ENCODE measurements at regions of chr17 and their contacts with region 1.

Region 1: GRCh38 chr17:42248351-42249179 is 27.6 kb downstream of the STAT5B start:
- DNase-seq: no peak
- H3K4me3 ChIP-seq: peak overlapping the region; percentile 18; the same call in 1 of the 2 replicates
- H3K27me3 ChIP-seq: no peaks in the 10 kb centered on the region
- CTCF ChIP-seq: no peak

Region 2: DNA sequence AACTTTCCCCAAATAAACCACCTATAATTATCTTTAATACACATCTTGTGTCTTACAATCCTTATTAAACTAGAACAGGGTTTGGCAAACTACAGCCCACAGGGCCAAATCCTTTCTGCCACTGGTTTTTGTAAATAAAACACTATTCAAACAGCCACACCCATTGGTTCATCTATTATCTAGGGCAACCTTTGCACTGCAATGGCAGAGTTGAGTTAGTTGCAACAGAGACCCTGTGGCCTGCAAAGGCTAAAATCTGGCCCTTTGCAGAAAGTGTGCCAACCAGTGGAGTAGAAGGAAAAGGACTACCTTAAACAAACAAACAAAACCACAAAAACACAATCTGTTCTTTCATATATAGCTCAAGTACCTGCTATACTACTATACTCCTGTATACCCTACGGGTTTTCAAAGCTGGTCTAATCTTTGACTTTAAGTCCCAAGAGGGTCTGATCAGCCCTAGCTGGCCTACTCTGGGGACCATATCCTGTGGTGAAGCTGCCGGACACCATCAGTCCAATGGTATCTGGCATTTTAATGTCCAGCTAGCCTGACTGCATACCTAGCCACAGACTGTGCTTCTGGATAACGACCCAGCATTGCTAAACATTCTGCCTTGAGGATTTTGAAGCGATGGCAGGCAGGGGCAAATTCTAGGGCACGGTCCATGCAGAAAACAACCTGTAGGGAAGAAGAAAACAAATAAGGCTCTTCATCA is 258.7 kb before region 1 on chr17:
- CTCF ChIA-PET with region 1: no interaction called
- POLR2A ChIA-PET with region 1: interaction called, 10 read pairs
- DNase-seq: no peak
- H3K4me3 ChIP-seq: no peak overlapping the region
- H3K27me3 ChIP-seq: no peaks in the 10 kb centered on the region
- CTCF ChIP-seq: no peak

Region 3: DNA sequence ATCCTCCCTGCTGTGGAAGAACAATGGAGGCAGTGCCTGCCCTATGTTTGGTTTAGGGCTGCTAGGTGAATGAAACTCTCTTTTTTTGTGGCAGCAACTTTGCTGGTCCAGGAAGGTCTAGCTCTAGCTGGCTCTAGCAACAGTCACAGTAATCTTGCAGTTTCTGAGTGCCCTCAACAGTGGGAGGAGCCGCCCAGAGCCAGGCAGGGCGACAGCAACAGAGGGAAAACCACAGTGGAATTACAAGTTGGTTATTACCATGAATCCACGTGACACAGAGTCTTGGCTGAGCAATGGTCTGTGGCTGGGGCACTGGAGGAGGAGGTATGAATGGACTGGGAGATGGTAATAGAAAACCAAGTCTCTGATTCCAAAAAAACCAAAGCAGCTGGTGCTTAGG is 115.6 kb before region 1 on chr17:
- CTCF ChIA-PET with region 1: no interaction called
- POLR2A ChIA-PET with region 1: no interaction called
- DNase-seq: peak; percentile 64
- H3K4me3 ChIP-seq: no peak overlapping the region
- H3K27me3 ChIP-seq: no peaks in the 10 kb centered on the region
- CTCF ChIP-seq: no peak